Head of caudate nucleus (tissue), 42 donors: ENCODE measurements at regions of chr21 and their contacts with region 1.

Region 1: GRCh38 chr21:34202553-34203372 is 129.4 kb downstream of the MRPS6 start:
- DNase-seq: peak in 32 of 42 donors; percentile 20 to 71 (median 40)

Region 2: DNA sequence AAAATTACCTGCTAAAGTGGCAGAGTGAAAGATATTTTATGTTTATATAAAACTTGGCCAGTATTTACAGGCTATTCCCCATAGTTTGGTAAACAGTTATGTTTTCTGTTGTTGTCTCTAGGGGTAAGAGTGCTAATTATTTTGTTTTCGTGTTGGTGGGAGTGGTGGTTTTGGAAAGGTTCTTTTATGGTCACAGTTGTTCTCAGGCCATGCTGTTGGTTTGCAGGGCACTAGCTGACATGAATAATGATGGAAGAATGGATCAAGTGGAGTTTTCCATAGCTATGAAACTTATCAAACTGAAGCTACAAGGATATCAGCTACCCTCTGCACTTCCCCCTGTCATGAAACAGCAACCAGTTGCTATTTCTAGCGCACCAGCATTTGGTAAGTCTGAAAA is 467.9 kb before region 1 on chr21:
- intact Hi-C with region 1: no loop called
- DNase-seq: no peak

Region 3: GRCh38 chr21:33947451-33948095 is 255.2 kb before region 1 on chr21:
- intact Hi-C with region 1: loop called (anchors 10 kb)
- DNase-seq: peak; percentile 49 to 95 (median 79)

Region 4: GRCh38 chr21:34073032-34073869 is 129.5 kb before region 1 on chr21 and contains the starts of genes MRPS6 and SLC5A3:
- intact Hi-C with region 1: loop called (anchors 5 kb)
- DNase-seq: peak; percentile 41 to 93 (median 82)

Region 5: DNA sequence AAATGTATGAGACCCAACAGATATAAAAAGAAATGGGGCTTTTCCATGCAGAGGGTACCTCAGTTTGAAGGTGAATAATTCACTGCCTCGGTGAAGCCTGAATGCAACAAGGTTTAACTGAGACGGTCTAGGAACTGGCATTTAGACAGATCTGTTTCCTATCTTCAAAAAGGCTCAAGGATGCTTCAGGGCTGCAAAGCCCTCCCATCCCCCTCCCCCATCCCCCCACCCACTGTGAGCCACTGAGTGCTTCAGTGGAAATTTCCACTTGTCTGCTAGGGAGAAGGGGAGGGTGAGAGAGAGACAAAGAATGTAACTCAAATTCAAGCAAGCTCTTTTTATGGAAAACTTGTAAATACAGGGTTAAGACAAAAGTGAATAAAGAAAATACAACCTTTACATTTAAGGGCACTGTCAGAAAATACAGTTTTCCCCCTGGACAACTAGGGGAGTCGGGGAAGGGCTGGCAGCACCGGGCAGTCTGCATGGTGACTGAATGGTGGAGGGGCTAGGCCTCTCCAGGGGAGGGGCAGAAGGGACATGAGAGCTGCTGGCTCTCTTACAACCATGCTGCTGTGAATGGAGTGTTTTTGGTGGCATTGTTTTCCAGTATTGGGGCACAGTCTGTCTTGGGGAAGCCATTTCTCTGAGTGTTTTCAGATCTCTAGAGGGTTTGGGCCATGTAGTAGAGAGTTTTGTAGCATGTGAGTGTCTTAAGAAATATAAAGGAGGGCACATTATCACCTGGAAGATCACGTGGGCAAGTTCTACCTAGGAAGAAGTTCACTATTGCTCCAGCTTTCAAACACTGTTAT is 72.7 kb before region 1 on chr21:
- intact Hi-C with region 1: loop called (anchors 5 kb)
- DNase-seq: no peak